ENCODE measurements at regions of chr1 and their contacts with region 1.

Region 1: GRCh38 chr1:8314346-8315280 is 3.3 kb upstream of the SLC45A1 start:
- DNase-seq: peak; percentile 67
- ATAC-seq: peak; percentile 81

Region 2: DNA sequence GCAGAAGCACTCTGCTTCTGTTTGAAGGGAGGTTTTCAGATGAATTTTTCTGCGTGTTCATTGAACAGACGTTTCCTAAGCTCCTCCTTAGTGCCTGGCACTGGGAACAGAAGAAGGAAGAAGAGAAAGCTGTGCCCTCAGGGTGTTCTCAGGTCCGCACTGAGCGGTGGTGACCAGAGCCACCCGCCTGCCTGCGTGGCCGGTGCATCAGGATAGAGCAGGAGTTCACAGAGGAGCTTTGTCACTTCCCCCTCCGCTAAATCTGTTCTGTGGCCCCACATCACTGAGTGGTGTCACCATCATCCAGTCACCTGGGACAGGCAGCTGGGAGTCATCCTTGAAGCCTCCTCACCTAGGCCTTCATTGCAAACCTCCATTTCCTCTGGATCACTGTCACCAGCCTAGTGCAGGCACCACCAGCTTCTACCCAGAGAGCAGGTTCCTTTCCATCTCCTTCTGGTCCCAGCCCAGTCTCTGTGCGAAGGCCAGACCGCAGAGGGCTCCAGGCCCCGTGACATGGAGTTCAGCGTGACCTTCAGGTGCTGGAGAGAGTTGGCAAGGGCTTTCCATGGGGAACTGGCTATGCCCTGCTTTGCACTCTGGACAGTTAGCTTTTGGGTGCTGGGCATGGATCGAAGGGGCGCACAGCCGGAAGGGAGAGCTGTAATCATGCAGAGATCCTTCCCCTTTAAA is 331.4 kb before region 1 on chr1:
- intact Hi-C with region 1: loop called (anchors 5 kb)
- DNase-seq: no peak
- ATAC-seq: peak; percentile 69

Region 3: DNA sequence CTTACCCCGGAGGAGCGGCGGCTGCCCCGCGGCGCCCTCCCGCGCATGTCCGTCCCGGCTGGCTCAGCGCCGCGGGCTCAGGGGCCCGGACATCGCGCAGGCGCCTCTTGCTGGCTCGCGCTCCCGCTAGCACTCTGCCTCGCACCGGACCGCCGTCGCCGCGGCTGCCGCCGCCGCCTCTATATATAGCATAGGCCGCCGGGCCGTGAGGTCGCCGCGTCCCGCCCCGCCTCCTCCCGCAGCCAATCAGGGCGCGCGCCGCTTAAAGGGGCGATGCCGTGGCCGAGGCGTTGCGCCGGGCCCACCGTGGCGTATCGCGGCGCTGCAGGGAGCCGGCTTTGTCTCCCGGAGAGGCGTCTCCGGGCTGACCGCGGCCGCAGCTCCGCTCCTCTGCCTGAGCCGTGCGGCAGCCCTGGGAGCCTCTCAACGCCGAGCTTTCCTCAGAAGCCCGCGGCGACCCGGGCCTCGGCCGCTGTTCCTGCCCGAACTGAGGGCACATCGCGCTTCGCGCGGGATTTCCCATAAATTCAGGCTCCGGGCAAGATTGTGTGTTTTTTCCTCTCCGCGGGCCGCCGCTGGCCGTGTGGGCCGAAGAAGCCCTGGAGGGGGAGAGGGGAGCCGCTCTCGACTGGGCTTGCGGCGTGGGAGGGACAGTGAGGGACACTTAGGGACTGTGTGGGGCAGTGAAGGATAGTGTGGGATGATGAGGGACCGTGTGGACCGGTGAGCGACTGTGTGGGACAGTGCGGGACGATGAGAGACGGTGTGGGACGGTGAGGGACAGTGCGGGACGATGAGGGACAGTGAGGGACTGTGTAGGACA is 288.2 kb before region 1 on chr1 and contains the start of gene ERRFI1:
- intact Hi-C with region 1: loop called (anchors 5 kb)
- DNase-seq: peak; percentile 97
- ATAC-seq: peak; percentile 97
- total RNA-seq, gene ERRFI1: 11.1 TPM

Region 4: DNA sequence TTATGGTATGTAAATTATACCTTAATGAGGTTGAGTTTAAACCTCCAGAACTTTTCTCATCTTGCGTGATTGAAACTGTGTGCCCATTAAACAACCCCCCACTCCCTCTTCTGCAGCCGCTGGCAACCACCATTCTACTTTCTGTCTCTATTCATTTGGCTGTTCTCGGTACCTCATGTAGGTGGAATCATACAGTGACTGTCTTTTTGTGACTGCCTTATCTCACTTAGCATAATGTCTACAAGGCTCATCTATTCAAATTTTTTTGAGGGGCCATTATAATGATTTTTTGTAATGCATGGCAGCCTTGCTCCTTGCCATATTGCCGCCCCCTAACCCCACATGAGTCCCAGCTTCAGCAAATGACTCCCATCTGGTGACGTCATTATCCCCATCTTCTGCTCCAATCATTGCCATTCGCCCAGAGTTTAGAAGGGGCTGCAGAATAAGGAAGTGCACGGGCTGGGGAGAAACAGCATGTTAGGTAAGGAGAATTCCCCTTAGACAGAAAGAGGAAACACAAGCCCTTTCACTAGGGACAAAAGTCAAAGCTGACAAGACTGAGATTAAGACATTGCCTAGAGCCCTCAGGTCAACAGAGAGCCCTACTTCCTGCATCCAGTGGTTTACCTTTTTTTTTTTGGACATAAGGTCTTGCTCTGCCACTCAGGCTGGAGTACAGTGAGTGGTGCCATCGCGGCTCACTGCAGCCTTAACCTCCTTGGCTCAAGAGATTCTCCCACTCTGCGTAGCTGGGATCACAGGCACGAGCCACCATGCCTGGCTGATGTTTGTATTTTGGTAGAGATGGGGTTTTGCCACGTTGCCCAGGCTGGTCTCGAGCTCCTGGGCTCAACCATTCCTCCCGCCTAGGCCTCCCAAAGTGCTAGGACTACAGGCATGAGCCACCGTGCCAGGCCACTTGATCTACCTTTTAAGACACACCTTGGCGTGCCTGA is 210.1 kb before region 1 on chr1:
- intact Hi-C with region 1: no loop called
- DNase-seq: no peak
- ATAC-seq: no peak

Measured in Right ventricle myocardium superior (tissue), 1 donor.